Activated T-helper 1 cell treated with anti-CD3 and anti-CD28 coated beads, Interleukin-12 subunit alpha, Interleukin-12 subunit beta, Interleukin-2, Interleukin-4 antibody, amounts not matched to agents 30 ng/mL and 10 ng/mL and 1 ng/mL, durations not matched to agents 14 hours and 24 hours and 36 hours (primary cell): ENCODE measurements at regions of chr2 and their contacts with region 1.

Region 1: DNA sequence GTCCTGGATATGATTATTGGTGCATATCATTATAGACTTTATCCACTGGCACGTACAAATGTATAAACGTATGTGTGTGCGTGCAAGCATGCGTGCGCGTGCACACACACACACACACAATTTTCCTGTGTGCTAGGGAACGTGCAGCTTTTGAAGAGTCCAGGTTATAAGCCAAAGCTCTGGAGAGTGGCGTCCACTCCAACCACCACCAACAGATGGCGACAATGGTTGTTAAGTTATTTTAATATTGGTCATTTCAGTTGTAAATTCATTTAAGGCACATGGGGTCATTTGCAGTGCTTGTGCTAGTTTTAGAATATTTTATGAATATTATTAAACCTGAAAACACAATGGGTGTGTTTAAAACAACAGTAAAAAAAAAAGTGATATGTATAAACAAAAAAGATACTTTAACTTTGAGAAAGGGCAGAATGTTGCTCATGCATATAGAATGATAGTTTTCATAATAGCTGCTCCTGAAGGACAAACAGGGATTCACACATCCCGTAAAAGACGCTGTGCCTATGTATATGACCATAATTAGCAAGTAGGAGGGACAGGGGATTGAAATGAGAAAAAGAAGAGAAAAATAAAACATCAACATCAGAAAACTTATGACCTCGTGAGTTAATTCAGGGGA is 124.2 kb upstream of the ITGB6 start:
- DNase-seq: no peak
- H3K4me3 Mint-ChIP-seq: no peak overlapping the region
- H3K27ac Mint-ChIP-seq: peak overlapping the region; percentile 35
- H3K4me1 Mint-ChIP-seq: peaks cover 65% of the 10 kb centered on the region
- H3K27me3 Mint-ChIP-seq: peaks cover 6% of the 10 kb centered on the region

Region 2: GRCh38 chr2:160269803-160270570 is 54.3 kb before region 1 on chr2:
- intact Hi-C with region 1: loop called (anchors 1 kb)
- DNase-seq: peak; percentile 25
- H3K4me3 Mint-ChIP-seq: peak overlapping the region; percentile 62
- H3K27ac Mint-ChIP-seq: no peak overlapping the region
- H3K4me1 Mint-ChIP-seq: peaks cover 33% of the 10 kb centered on the region
- H3K27me3 Mint-ChIP-seq: peaks cover 16% of the 10 kb centered on the region

Region 3: DNA sequence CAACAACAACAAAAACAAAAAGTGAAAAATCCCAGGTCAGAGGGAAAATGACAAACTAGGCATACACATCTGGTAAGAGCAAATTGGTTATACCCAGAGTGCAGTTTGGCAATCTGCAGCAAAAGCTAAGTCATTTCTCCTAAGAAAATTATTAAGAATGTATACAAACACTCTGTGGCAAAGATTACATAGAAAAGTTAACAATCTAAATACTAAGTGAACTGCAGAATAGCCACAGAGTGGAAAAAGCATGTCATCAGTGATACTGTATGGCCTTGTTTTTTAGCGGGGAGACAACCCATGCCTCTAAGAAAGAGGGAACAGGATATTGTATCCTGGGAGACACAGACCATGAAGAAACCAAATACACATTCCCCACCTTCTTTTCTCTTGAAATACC is 11.8 kb after region 1 on chr2:
- intact Hi-C with region 1: loop called (anchors 1 kb)
- DNase-seq: no peak
- H3K4me3 Mint-ChIP-seq: no peak overlapping the region
- H3K27ac Mint-ChIP-seq: peak overlapping the region; percentile 6
- H3K4me1 Mint-ChIP-seq: peaks cover 65% of the 10 kb centered on the region
- H3K27me3 Mint-ChIP-seq: no peaks in the 10 kb centered on the region

Region 4: GRCh38 chr2:160358046-160358445 is 33.8 kb after region 1 on chr2:
- intact Hi-C with region 1: no loop called
- DNase-seq: no peak
- H3K4me3 Mint-ChIP-seq: no peak overlapping the region
- H3K27ac Mint-ChIP-seq: no peak overlapping the region
- H3K4me1 Mint-ChIP-seq: peaks cover 20% of the 10 kb centered on the region
- H3K27me3 Mint-ChIP-seq: no peaks in the 10 kb centered on the region

Region 5: GRCh38 chr2:160429248-160430000 is 105.1 kb after region 1 on chr2:
- intact Hi-C with region 1: loop called (anchors 2 kb)
- DNase-seq: no peak
- H3K4me3 Mint-ChIP-seq: no peak overlapping the region
- H3K27ac Mint-ChIP-seq: no peak overlapping the region
- H3K4me1 Mint-ChIP-seq: peaks cover 66% of the 10 kb centered on the region
- H3K27me3 Mint-ChIP-seq: no peaks in the 10 kb centered on the region

Region 6: DNA sequence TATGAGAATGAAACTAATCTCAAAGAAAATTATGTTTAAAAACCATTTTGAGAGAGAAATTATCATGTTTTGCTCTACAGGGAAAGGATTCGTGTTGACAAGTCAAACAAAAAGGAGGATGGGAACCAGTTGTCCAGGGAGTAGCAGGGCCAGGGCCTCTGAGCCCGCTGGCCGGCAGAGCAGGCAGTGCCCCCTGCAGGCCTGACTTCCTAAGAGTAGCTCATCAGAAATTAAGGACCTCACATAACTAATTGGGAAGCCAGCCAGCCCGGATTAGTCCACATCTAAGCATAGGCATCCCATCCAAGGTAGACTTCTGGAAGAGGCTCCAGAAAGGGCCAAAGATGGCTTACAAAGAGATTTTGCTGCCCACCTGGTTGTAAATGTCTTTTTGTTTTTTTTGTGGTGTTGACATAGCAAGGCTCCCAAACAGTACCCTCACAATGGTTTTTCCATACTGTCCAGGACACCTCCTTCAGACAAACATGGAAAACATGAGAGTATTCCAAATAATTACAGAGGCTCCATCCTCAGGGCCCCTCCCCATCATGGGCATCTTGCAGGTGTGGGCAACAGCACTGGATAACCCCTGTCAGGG is 594.7 kb after region 1 on chr2:
- intact Hi-C with region 1: loop called (anchors 1 kb)
- DNase-seq: no peak
- H3K4me3 Mint-ChIP-seq: no peak overlapping the region
- H3K27ac Mint-ChIP-seq: no peak overlapping the region
- H3K4me1 Mint-ChIP-seq: no peaks in the 10 kb centered on the region
- H3K27me3 Mint-ChIP-seq: peaks cover 10% of the 10 kb centered on the region

Region 7: GRCh38 chr2:161160226-161161069 is 836.2 kb after region 1 on chr2 and contains the start of gene TANK:
- intact Hi-C with region 1: loop called (anchors 10 kb)
- DNase-seq: peak; percentile 88
- H3K4me3 Mint-ChIP-seq: peak within 1 kb of the TSS; percentile 97
- H3K27ac Mint-ChIP-seq: peak within 1 kb of the TSS; percentile 99
- H3K4me1 Mint-ChIP-seq: peaks cover 81% of the 10 kb centered on the region
- H3K27me3 Mint-ChIP-seq: no peaks in the 10 kb centered on the region
- total RNA-seq, gene TANK: 136 and 141 TPM in 2 replicates